ENCODE measurements at regions of chr14 and their contacts with region 1.

Region 1: GRCh38 chr14:99884834-99885648 is 91.8 kb downstream of the EML1 start:
- DNase-seq: no peak
- H3K4me3 ChIP-seq: no peak overlapping the region
- H3K27ac ChIP-seq: no peak overlapping the region
- H3K4me1 ChIP-seq: no peaks in the 10 kb centered on the region
- H3K27me3 ChIP-seq: no peaks in the 10 kb centered on the region
- CTCF ChIP-seq: peak; percentile 70

Region 2: GRCh38 chr14:99518441-99519346 is 366.3 kb before region 1 on chr14:
- intact Hi-C with region 1: loop called (anchors 10 kb)
- DNase-seq: peak; percentile 86
- H3K4me3 ChIP-seq: no peak overlapping the region
- H3K27ac ChIP-seq: no peak overlapping the region
- H3K4me1 ChIP-seq: peaks cover 6% of the 10 kb centered on the region
- H3K27me3 ChIP-seq: no peaks in the 10 kb centered on the region
- CTCF ChIP-seq: peak; percentile 96

Region 3: DNA sequence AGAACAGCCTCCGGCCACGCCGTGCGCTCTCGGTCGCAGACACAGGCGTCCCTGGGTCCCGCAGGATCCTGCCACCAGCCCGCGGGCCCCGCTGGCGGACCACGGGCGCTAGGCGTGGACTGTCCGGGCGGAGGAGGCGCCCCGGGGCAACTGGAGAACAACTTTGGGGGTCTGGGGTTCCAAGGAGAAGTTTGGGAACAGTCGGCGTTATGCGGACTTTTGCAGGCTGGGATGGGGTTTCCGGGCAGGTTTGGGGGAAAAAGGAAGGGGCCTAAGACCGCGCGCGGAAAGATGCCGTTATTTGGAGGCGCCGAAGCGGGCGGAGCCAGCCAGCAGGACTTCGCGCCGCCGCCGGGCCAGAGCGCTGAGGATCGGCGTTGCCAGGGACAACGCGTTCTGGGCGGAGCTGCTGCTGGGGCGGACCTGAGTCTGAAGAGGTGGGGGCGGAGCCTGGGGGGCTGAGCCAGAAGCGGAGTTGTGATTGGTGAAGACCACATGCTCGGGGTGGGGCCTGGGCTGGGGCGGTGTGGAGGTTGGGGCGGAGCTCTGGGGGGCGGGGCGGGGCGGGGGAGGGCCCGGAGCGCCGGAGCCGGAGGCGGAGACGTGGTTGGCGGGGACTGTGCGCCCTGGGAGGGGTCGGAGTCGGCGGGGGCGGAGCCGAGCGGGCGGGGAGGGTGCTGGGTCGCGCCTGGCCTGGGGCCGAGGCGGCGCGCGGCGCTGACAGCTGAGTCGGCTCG is 201.3 kb before region 1 on chr14 and contains the start of gene CYP46A1:
- intact Hi-C with region 1: loop called (anchors 5 kb)
- DNase-seq: peak; percentile 100
- H3K4me3 ChIP-seq: peak within 1 kb of the TSS; percentile 60
- H3K27ac ChIP-seq: peak within 1 kb of the TSS; percentile 51
- H3K4me1 ChIP-seq: peaks cover 5% of the 10 kb centered on the region
- H3K27me3 ChIP-seq: no peaks in the 10 kb centered on the region
- CTCF ChIP-seq: no peak
- total RNA-seq, gene CYP46A1: 0.05 to 0.25 TPM

Region 4: GRCh38 chr14:99729991-99730868 is 154.8 kb before region 1 on chr14:
- intact Hi-C with region 1: loop called (anchors 2 kb)
- DNase-seq: peak; percentile 73
- H3K4me3 ChIP-seq: peak overlapping the region; percentile 32
- H3K27ac ChIP-seq: no peak overlapping the region
- H3K4me1 ChIP-seq: no peaks in the 10 kb centered on the region
- H3K27me3 ChIP-seq: peaks cover 5% of the 10 kb centered on the region
- CTCF ChIP-seq: peak; percentile 84

Region 5: GRCh38 chr14:99982537-99983250 is 97.7 kb after region 1 on chr14:
- intact Hi-C with region 1: no loop called
- DNase-seq: peak; percentile 58
- H3K4me3 ChIP-seq: no peak overlapping the region
- H3K27ac ChIP-seq: no peak overlapping the region
- H3K4me1 ChIP-seq: no peaks in the 10 kb centered on the region
- H3K27me3 ChIP-seq: peaks cover 11% of the 10 kb centered on the region
- CTCF ChIP-seq: peak; percentile 61

Measured in colonic mucosa (tissue), 4 donors.